ENCODE measurements at regions of chr16 and their contacts with region 1.

Region 1: DNA sequence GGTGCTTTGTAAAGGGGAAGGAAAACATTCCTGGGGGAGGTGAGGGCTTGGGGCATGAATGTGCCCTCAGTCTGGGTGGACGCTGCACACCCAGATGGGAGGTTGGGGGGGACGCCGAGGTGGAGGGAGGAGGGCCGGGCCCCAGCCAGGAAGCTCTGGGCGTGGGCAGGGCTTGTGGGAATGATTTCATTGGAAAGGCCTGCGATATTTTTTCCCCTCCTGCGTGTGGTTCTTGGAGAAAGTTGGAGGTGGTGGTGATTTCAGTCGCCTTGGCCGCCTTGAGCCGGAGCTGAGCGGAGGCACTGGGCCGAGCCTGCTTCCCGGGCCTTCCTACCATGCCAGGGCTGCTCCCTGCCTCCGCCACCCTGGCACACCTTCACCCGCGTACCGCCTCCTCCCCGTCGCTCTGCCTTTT is 26.4 kb upstream of the CLEC18A start:
- DNase-seq: no peak
- ATAC-seq: no peak
- H3K4me3 ChIP-seq: no peak overlapping the region
- H3K27ac ChIP-seq: no peak overlapping the region
- H3K4me1 ChIP-seq: no peaks in the 10 kb centered on the region
- H3K27me3 ChIP-seq: no peaks in the 10 kb centered on the region
- CTCF ChIP-seq: no peak

Region 2: DNA sequence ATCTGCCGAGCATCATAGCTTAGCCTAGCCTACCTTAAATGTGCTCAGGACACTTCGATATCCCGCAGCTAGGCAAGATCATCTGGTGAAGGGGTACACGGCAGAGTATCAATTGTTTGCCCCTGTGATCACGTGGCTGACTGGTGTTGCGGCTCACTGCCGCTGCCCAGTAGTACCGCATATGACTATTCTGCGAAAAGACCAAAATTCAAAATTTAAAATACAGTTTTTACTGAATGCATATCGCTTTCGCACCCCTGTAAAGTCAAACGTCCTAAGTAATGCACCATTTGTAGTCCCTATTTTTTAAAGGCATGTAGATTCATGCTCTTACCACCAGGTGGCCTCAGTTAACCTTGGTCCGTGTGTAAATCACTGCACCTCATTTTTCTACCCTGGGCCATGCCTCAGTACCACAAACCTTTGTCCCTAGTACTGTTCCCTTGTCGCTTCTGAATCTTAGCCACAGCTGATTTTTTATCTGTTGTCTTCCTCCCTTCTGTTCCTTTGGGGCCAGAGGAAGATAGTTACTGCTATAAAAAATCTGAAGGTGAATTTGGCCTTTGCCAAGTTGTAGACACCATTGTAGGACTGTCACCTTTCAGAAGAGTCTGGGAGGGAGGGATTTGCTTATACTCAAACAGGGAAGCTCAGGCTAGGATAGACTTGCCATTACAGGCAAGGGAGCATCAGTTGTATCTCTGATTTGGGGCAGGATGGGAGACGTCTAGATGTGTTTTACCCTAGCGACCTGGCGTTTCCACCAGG is 128.2 kb before region 1 on chr16:
- CTCF ChIA-PET with region 1: interaction called, 6 read pairs
- POLR2A ChIA-PET with region 1: no interaction called
- in situ Hi-C with region 1: no loop called
- intact Hi-C with region 1: loop called (anchors 5 kb)
- DNase-seq: peak; percentile 48
- ATAC-seq: peak; percentile 93
- H3K4me3 ChIP-seq: no peak overlapping the region
- H3K27ac ChIP-seq: no peak overlapping the region
- H3K4me1 ChIP-seq: no peaks in the 10 kb centered on the region
- H3K27me3 ChIP-seq: no peaks in the 10 kb centered on the region
- CTCF ChIP-seq: peak; percentile 89

Region 3: DNA sequence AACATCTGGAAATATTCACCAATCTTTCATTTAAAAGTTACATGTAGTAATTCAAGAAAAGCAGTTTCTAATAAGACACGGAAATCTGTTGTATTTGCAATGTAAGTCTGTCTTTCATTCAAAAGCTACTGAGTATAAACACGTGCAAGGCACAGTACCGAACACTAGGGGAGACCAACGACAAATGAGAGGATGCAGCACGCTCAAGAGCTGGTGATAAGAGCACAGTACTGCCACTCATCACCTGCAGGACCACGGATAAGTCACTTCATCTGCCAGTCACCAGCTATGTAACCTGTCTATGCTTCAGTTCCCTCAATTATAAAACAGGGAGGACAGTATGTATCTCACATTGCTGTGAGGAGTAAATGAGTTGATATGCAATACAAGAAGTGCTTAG is 93.5 kb after region 1 on chr16:
- CTCF ChIA-PET with region 1: no interaction called
- POLR2A ChIA-PET with region 1: no interaction called
- in situ Hi-C with region 1: no loop called
- intact Hi-C with region 1: no loop called
- DNase-seq: no peak
- ATAC-seq: peak; percentile 82; the same call in 1 of the 2 replicates
- H3K4me3 ChIP-seq: no peak overlapping the region
- H3K27ac ChIP-seq: no peak overlapping the region
- H3K4me1 ChIP-seq: no peaks in the 10 kb centered on the region
- H3K27me3 ChIP-seq: no peaks in the 10 kb centered on the region
- CTCF ChIP-seq: peak; percentile 44

Measured in Panc1 (cell line).